Heart right ventricle (tissue), 16 donors: ENCODE measurements at regions of chr3 and their contacts with region 1.

Region 1: DNA sequence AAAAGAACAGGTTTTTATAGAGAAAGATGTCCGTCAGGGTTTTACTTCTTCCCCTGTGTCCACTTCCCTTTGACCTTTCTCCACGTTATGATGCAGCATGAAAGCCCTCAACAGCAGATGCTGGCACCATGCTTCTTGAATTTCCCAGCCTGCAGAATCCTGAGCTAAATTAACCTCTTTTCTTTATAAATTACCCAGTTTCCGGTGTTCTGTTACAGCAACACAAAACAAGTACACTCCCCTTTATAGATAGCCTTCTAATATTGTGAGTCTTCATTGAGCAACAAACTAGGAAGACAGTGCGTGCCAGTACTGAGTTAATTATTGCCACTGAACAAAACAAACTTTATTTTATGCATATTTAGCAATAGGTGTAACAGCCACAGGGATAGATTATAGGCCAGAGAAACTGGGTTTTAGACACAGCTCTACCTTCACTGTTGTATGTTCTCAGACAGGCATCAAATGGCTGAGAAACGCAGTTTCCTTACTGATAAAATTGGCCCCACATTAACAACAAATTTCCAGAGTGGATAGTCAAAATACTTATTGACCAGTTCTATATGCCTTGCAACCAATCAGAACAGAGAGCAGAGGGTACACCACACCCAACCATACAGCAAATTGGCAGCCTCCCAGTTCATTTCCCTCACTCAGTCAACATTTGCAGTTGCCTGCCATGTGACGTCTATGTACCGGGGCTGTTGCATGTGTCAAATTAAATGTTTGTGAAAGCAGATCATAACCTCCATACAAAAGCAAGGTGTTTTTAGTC is 14.4 kb upstream of the TBL1XR1 start:
- DNase-seq: no peak
- ATAC-seq: no peak
- H3K4me3 ChIP-seq: no peak overlapping the region
- H3K27ac ChIP-seq: no peak overlapping the region
- H3K4me1 ChIP-seq: no peaks in the 10 kb centered on the region
- H3K27me3 ChIP-seq: no peaks in the 10 kb centered on the region
- CTCF ChIP-seq: no peak

Region 2: DNA sequence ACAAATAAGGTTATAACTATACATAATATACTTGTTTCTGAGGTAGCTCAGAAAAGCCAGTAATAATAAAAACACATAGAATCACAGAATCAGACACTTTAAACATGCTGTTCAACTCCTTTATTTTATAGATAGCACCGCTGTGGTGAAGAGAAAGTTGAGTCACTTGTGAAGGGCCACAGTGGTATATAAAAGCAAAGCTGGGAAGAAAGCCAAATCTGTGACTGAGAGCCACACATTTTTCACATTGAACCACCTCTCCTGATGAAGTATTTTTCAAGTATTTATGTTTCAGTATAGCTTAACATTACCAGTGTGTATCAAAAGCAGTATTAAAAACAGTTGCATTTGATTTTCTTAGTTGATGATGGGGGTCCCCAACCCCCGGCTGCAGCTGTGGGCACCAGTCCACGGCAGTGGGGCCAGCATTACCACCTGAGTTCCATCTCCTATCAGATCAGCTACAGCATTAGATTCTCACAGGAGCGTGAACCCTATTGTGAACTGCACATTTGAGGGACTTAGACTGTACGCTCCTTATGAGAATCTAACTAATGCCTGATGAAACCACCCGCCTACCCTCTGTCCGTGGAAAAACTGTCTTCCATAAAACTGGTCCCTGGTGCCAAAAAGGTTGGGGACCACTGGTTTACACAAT is 60.6 kb before region 1 on chr3:
- intact Hi-C with region 1: no loop called
- DNase-seq: no peak
- ATAC-seq: peak in 4 of 8 donors; percentile 37 to 54 (median 48)
- H3K4me3 ChIP-seq: no peak overlapping the region
- H3K27ac ChIP-seq: no peak overlapping the region
- H3K4me1 ChIP-seq: peaks cover 0 to 85% (median 59%) of the 10 kb centered on the region in 9 donors
- H3K27me3 ChIP-seq: no peaks in the 10 kb centered on the region
- CTCF ChIP-seq: no peak

Region 3: DNA sequence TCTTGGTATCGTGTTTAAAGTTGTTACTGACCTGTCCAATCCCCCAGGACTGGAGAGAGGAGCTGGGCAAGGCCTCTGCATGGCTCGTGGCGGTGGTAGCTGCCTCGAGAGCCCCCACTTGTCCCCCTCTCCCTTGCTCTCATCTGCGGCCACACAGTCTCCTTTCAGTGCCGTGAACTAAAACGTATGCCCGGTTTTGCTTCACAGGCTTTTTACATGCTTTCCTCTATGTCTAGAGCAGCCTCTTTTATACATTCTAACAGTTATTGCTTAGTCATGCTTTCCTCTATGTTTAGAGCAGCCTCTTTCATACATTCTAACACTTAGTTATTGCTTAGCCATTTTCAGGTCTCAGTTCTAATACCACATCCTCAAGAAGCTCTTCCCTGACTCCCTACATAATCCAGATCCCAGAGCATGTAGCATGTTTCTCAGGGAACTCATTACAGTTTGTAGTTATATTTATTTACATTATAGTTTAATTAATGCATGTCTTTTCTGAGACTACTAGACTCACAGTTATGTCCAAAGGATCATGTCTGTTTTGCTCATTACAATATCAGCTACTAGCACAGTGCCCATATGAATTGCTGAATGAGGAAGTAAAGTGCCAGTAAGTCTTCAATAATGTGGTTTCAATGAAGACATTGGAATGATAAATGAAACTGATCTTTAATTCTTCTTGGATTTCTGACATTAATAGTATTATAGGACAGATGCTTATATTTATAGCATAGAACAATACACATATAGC is 52.1 kb after region 1 on chr3:
- intact Hi-C with region 1: loop called in 1 of 10 experiments (anchors 10 kb)
- DNase-seq: no peak
- ATAC-seq: no peak
- H3K4me3 ChIP-seq: no peak overlapping the region
- H3K27ac ChIP-seq: no peak overlapping the region
- H3K4me1 ChIP-seq: peaks cover 0 to 11% (median 0%) of the 10 kb centered on the region in 9 donors
- H3K27me3 ChIP-seq: no peaks in the 10 kb centered on the region
- CTCF ChIP-seq: no peak

Region 4: GRCh38 chr3:177279118-177279815 is 67.6 kb after region 1 on chr3:
- intact Hi-C with region 1: loop called in 3 of 10 experiments (anchors 10 kb)
- DNase-seq: no peak
- ATAC-seq: no peak
- H3K4me3 ChIP-seq: no peak overlapping the region
- H3K27ac ChIP-seq: no peak overlapping the region
- H3K4me1 ChIP-seq: peaks cover 0 to 23% (median 3%) of the 10 kb centered on the region in 9 donors
- H3K27me3 ChIP-seq: no peaks in the 10 kb centered on the region
- CTCF ChIP-seq: no peak

Region 5: GRCh38 chr3:177306252-177306651 is 94.6 kb after region 1 on chr3:
- intact Hi-C with region 1: no loop called
- DNase-seq: no peak
- ATAC-seq: no peak
- H3K4me3 ChIP-seq: no peak overlapping the region
- H3K27ac ChIP-seq: no peak overlapping the region
- H3K4me1 ChIP-seq: no peaks in the 10 kb centered on the region
- H3K27me3 ChIP-seq: no peaks in the 10 kb centered on the region
- CTCF ChIP-seq: no peak

Region 6: DNA sequence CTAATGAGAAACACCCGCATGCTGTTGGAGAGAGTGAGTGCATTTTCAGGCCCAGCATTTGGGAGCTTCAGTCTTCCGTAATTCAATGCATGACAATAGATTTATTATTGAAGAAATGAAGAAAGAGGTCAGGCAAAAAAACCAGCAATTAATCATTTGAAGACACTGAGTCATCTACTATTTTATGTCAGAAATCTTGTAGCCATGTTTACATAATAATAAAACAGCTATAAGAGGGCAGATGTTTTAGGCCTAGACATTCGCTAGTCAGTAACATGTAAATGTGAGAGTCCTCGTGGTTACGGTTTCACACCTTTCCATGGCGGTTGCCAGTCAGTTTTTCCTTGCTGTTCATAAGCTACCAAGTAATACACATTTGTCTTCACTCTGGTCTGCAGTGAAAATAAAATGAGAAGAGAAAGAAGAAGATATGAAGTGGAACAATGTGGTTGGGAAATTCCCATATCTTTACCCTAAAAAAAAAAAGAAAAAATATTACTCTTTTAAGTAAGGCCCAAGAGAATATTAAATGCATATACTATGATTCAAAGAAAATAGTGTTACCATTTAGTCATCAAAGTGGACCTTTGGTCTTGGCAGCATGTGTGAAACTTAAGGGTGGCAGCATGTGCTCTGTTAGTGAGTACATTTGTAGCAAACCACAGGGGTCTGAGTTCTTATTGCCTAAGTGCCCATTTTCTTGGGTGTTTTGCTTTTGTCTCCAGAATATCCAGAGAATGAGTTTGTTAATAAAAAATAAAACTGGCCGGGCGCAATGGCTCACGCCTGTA is 126.0 kb after region 1 on chr3:
- intact Hi-C with region 1: loop called in 1 of 10 experiments (anchors 10 kb)
- DNase-seq: no peak
- ATAC-seq: no peak
- H3K4me3 ChIP-seq: no peak overlapping the region
- H3K27ac ChIP-seq: peak overlapping the region in 7 of 10 donors; percentile 7 to 92 (median 81)
- H3K4me1 ChIP-seq: peaks cover 4 to 89% (median 58%) of the 10 kb centered on the region in 9 donors
- H3K27me3 ChIP-seq: no peaks in the 10 kb centered on the region
- CTCF ChIP-seq: no peak

Region 7: DNA sequence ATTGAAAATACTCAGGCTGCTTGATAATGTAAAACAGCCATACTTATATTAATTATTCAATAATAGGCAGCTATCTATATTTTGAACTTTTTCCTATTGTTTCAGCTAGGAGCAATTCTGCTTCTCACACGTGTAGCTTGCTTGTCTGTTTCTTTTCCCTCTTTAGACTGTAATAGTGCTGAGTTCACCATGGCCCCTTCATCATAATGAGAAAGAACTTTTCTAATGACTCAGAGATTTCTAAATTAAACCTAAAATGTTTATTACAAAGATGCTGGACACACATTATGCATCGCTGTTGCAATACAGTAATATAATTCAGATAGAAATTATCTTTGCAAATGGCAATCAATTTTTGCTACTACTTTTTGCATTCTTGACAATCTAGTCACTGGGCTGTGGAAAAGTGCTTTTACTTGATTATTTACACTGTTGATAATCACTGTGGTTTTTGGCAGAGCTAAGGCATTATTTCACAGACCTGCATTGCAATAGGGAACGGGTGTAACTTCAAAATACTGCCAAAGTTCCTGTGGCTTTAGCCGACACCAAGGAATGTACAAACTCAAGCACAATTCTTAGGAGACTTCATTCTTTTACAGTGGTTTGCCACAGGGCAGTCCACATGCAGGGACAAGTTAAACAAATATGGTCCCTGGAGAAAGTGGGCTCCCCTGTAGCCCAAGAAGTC is 266.6 kb after region 1 on chr3:
- intact Hi-C with region 1: no loop called
- DNase-seq: peak in 1 of 2 donors; percentile 25
- ATAC-seq: peak; percentile 88 to 93 (median 89)
- H3K4me3 ChIP-seq: no peak overlapping the region
- H3K27ac ChIP-seq: peak overlapping the region in 9 of 10 donors; percentile 13 to 70 (median 51)
- H3K4me1 ChIP-seq: peaks cover 0 to 26% (median 18%) of the 10 kb centered on the region in 9 donors
- H3K27me3 ChIP-seq: no peaks in the 10 kb centered on the region
- CTCF ChIP-seq: no peak